ENCODE measurements at regions of chr9 and their contacts with region 1.

Region 1: DNA sequence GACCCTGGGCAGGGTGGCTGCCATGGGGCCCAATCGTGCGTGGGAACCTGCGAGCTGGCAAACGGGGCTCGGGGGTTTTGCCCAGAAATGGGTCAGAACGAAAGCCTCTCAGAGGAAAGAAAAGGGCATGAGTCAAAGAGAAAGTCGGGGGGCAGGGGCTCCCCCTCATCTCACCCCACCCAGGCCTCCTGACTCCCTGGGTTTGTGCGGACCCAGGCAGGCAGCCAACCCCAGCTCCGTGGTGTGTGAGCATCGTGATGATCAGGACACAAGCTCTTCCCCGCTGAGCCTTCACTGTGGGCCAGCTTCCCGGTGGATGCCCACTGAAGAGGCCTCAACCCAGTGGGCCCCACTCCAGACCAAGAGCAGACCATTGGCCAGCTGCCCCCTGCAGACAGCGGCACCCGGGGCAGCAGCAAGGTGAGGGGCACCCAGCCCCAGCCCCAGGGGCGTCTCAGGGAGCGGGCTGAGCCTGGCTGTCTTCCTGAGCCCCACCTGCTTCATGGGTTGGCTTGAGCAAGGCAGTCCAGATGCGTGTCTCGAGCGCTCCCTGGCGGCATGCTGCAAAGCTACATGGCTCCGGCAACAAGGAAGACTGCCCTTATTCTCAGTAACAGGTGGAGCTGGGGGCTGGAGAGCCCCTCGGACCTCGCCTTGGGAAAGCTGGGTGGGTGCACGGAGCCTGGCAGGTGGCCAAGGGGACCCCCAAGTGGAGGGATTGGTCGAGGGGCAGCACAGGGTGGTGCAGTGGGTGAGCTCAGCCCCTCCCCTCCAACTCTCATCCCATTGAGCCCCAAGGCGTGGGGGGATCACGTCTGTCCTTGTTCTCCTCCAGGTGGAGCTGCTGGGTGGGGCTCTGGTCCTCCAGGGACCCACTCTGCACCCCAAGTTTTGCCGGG is 3.2 kb upstream of the FUT7 start:
- DNase-seq: peak; percentile 91
- H3K27ac ChIP-seq: peak overlapping the region; percentile 66
- CTCF ChIP-seq: peak; percentile 100

Region 2: GRCh38 chr9:136849038-136849959 is 185.8 kb before region 1 on chr9 and contains the start of gene PHPT1:
- CTCF ChIA-PET with region 1: interaction called, 25 read pairs
- POLR2A ChIA-PET with region 1: no interaction called
- DNase-seq: peak; percentile 100
- H3K27ac ChIP-seq: peak within 1 kb of the TSS; percentile 98
- CTCF ChIP-seq: no peak

Region 3: DNA sequence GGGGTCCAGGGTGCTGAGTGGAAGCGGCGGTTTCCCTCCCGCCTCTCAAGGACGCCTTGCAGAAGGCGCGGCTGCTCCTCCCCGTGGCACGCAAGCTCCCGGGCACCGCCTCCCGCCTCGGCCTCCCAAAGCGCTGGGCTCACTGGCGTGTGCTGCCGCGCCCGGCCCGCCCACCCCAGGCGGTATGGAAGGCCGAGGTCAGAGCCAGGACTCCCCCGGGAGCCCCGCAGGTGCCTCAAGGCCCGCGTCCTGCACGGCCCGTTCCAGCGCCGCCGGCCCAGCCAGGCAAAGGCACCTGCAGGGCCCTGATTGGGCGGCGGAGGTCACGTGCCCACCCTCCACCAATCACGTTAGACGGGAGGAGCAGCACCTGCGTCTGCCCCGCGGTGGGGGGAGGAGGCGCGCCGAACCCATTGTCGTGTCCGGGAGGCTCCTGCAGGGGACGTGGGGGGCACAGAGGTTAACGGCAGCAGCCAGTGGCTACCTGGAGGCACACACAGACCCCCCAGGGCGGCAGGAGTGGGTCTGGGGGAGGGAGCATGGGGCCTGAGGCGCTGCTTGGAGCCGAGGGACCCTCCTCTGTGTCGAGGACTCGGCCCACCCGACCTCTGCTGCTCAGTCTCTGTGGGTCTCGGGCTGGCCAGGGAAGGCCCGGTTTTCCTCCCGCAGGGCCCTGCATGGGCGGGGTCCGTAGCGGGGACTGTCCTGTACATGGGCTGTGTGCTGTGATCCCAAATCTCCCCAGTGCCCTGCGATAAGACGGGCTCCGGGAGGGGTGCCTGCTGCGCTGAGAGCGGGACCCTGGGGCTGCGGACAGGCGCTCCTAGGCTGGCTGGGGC is 85.1 kb before region 1 on chr9:
- CTCF ChIA-PET with region 1: interaction called, 97 read pairs
- POLR2A ChIA-PET with region 1: interaction called, 9 read pairs
- DNase-seq: peak; percentile 100
- H3K27ac ChIP-seq: peak overlapping the region; percentile 89
- CTCF ChIP-seq: no peak; the same call in 1 of the 2 replicates

Region 4: GRCh38 chr9:137046098-137046787 is 11.1 kb after region 1 on chr9 and contains the start of gene NPDC1:
- CTCF ChIA-PET with region 1: interaction called, 63 read pairs
- POLR2A ChIA-PET with region 1: no interaction called
- DNase-seq: peak; percentile 95
- H3K27ac ChIP-seq: peak within 1 kb of the TSS; percentile 48
- CTCF ChIP-seq: peak; percentile 99

Region 5: DNA sequence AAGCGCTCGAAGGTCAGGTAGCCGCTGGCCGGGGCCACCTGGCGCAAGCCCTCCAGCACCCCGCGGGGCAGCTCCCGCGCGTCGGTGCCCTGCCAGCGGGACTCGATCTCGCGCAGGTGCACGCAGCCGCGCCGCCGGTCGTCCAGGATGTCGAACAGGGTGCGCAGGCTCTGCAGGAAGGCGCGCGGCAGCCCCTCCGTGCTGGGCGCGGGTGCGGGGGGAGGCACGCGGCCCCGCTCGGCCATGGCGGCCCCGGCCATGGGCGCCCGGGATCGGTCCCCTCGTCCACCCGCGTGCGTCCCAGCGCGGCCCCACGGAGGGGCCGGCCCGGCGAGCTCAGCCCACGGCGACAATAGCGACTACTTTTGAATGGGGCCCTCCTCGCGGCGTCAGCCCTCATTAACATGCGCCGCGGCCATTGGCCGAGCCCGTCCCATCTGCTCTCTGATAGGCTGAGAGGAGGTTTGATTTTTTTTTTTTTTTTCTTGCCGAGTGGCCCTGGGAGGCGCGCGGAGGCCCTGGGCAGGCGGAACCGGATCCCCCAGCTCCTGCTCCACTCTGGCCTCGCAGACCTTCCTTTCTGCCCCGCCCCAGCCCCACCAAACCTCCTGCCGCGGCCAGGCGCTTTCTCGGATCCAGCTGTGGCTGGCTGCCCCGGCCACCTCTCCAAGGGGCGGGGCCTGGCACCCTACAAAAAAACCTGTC is 35.2 kb after region 1 on chr9 and contains the start of gene SAPCD2:
- CTCF ChIA-PET with region 1: interaction called, 31 read pairs
- POLR2A ChIA-PET with region 1: no interaction called
- DNase-seq: peak; percentile 96
- H3K27ac ChIP-seq: peak within 1 kb of the TSS; percentile 85
- CTCF ChIP-seq: no peak

Region 6: GRCh38 chr9:137095664-137096517 is 60.8 kb after region 1 on chr9:
- CTCF ChIA-PET with region 1: no interaction called
- POLR2A ChIA-PET with region 1: no interaction called
- DNase-seq: no peak
- H3K27ac ChIP-seq: 0 out of 2 replicates have a peak overlapping the region, but pooled peaks have one; percentile 1
- CTCF ChIP-seq: no peak; the same call in 1 of the 2 replicates

Region 7: DNA sequence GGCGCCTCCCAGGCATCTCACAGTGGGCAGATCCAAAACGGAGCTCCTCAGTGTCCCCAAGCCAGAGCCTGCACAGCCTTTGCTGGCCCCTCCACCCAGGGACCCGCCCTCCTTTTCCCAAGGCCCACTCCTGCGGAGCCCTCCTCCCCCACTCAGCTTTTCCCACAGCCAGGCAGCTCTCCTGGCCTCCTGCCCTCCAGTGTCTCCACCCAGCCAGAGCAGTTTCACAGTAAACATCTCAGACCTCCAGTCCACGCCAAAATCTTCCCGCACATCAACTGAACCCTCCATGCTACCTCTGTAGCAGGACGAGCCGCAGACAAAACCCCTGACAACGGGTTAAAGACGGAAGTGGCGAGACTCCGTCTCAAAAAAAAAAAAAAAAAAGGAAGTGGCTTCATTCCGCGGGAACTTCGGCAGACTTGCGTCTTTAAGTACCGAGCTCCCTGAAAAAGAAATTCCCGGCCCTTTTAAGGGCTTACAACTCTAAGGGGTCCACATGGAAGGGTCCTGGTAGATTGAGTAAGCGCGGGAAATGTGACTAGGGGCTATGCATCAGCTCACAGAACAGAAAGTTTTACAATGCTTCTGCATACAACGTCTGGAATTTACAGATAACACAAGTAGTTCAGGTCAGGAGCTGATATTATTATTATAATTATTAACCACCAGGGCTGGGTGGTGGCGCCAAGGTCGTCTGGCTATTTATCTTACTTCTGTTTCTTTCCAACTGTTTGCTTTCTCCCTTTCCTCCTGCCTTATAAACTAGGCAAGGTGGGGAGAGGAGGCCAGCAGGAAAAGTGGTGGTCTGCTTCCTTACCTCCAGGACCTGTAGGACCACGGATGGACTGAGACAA is 92.4 kb after region 1 on chr9:
- CTCF ChIA-PET with region 1: no interaction called
- POLR2A ChIA-PET with region 1: no interaction called
- DNase-seq: no peak
- H3K27ac ChIP-seq: peak overlapping the region; percentile 83
- CTCF ChIP-seq: no peak

Measured in RWPE1 (cell line).